PC-9 (cell line): ENCODE measurements at regions of chr7 and their contacts with region 1.

Region 1: GRCh38 chr7:20280475-20281351 is 50.0 kb upstream of the ITGB8 start:
- DNase-seq: no peak
- H3K4me3 ChIP-seq: no peak overlapping the region
- H3K27ac ChIP-seq: no peak overlapping the region
- H3K4me1 ChIP-seq: no peaks in the 10 kb centered on the region; the same call in 1 of the 2 replicates
- H3K27me3 ChIP-seq: no peaks in the 10 kb centered on the region
- CTCF ChIP-seq: no peak

Region 2: DNA sequence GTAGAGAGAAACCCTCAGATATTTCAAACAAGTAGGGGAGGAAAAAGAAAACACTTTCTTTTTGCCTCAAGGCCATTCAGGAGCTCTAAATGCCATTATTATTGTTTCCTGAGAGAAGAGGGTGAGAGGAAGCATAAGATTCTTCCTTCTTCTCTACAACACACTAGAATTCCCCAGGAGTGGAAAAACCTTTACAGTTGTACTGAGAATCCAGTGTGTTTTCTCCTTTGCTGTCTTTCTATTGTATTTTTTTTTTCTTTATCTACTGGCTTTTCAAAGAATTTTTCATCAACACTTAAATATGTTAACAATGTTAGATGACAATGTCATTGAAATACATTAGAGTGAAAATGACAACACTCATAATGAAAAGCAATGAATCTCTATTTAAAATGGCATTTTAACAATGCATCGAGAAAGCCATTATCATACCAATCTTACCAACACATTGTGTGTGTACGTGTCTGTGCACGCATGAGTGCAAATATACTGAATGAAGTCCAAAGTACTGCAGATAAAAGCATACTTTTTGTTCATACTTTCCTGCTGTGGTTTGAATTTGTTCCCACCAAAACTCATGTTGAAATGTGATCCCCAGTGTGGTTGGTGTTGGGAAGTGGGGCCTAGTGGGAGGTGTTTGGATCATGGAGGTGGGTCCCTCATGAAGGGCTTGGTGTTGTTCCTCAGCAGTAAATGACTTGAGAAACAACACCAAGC is 39.4 kb before region 1 on chr7:
- CTCF ChIA-PET with region 1: no interaction called
- POLR2A ChIA-PET with region 1: no interaction called
- intact Hi-C with region 1: loop called (anchors 5 kb)
- DNase-seq: peak in 1 of 2 experiments; percentile 54
- H3K4me3 ChIP-seq: no peak overlapping the region
- H3K27ac ChIP-seq: no peak overlapping the region
- H3K4me1 ChIP-seq: peaks cover 15% of the 10 kb centered on the region
- H3K27me3 ChIP-seq: no peaks in the 10 kb centered on the region
- CTCF ChIP-seq: no peak

Region 3: GRCh38 chr7:20374392-20374791 is 93.7 kb after region 1 on chr7:
- CTCF ChIA-PET with region 1: no interaction called
- POLR2A ChIA-PET with region 1: no interaction called
- intact Hi-C with region 1: no loop called
- DNase-seq: no peak
- H3K4me3 ChIP-seq: no peak overlapping the region
- H3K27ac ChIP-seq: no peak overlapping the region
- H3K4me1 ChIP-seq: no peaks in the 10 kb centered on the region
- H3K27me3 ChIP-seq: no peaks in the 10 kb centered on the region
- CTCF ChIP-seq: no peak

Region 4: DNA sequence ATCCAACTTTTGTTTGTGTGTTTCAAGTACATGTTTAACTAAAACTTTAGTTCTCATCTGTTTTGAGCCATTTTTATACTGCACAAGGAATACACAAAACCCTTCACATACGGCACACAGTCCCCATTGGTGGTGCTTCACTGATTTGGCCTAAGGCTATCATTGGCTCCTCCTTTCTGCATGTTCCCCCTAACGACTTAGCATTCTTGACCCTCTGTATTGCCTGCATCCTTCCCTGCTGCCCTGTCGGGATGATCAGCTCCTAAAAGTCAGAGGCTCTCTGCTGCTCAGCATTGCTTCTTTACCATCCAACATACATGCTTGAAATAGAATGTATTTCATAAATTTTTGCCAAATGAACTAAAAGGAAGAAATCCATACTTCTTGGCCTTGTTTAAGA is 223.3 kb after region 1 on chr7:
- CTCF ChIA-PET with region 1: no interaction called
- POLR2A ChIA-PET with region 1: interaction called, 15 read pairs
- intact Hi-C with region 1: no loop called
- DNase-seq: no peak
- H3K4me3 ChIP-seq: no peak overlapping the region
- H3K27ac ChIP-seq: no peak overlapping the region
- H3K4me1 ChIP-seq: no peaks in the 10 kb centered on the region
- H3K27me3 ChIP-seq: no peaks in the 10 kb centered on the region
- CTCF ChIP-seq: no peak

Region 5: DNA sequence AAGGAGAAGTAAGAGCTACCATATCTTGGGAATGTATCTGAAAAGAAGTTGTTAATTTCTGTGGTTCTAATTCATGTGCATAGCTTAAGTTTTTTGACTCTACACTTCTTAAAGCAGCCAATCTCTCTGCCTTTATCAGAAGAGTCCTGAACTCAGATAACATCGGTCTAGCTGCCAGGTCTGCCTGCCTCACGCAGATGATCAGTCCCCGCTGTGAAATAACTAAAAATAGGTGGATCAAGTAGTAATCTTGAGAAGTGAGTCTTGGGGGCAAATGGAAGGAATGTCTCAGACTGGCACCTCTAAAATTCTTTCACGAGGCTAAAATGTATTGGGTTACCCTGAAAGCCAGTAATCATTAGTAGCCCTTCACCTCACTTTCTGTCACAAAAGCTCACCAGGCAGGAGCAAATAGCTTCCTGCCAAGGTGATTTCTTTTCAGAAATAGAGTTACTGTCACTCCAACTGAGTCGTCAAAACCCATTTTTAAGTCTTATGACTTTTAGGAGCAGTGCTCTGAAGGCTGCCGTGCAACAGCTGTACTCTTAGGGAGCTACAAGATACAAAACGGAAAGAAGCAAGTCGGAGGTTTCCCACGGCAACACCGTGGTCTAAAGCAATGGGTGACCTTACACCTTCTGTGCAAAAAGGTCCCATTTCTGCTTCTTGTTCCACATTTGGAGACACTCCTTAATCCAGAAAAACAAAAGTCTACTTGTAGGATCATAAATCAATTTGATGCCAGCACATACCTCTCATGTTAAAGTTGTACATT is 419.9 kb after region 1 on chr7:
- CTCF ChIA-PET with region 1: no interaction called
- POLR2A ChIA-PET with region 1: no interaction called
- intact Hi-C with region 1: no loop called
- DNase-seq: no peak
- H3K4me3 ChIP-seq: no peak overlapping the region
- H3K27ac ChIP-seq: no peak overlapping the region
- H3K4me1 ChIP-seq: peaks cover 11% of the 10 kb centered on the region
- H3K27me3 ChIP-seq: no peaks in the 10 kb centered on the region
- CTCF ChIP-seq: no peak